Activated naive CD4-positive, alpha-beta T cell treated with anti-CD3 and anti-CD28 coated beads for 36 hours (primary cell): ENCODE measurements at regions of chr6 and their contacts with region 1.

Region 1: GRCh38 chr6:125749173-125749864 is at the start of gene HEY2:
- DNase-seq: peak; percentile 83
- H3K4me3 Mint-ChIP-seq: peak within 1 kb of the TSS; percentile 79
- H3K27ac Mint-ChIP-seq: no peak within 1 kb of the TSS
- H3K4me1 Mint-ChIP-seq: peaks cover 33% of the 10 kb centered on the region
- H3K27me3 Mint-ChIP-seq: peaks cover 51% of the 10 kb centered on the region
- total RNA-seq, gene HEY2: not detected

Region 2: GRCh38 chr6:124961777-124962611 is 787.3 kb before region 1 on chr6 and contains the start of gene RNF217:
- CTCF ChIA-PET with region 1: no interaction called
- intact Hi-C with region 1: loop called (anchors 5 kb)
- DNase-seq: peak; percentile 33
- H3K4me3 Mint-ChIP-seq: peak within 1 kb of the TSS; percentile 81
- H3K27ac Mint-ChIP-seq: no peak within 1 kb of the TSS
- H3K4me1 Mint-ChIP-seq: peaks cover 41% of the 10 kb centered on the region
- H3K27me3 Mint-ChIP-seq: peaks cover 52% of the 10 kb centered on the region
- total RNA-seq, gene RNF217: 1.8 to 2.4 TPM

Region 3: GRCh38 chr6:125191916-125192609 is 557.3 kb before region 1 on chr6:
- CTCF ChIA-PET with region 1: no interaction called
- intact Hi-C with region 1: loop called (anchors 2 kb)
- DNase-seq: peak; percentile 80
- H3K4me3 Mint-ChIP-seq: no peak overlapping the region
- H3K27ac Mint-ChIP-seq: no peak overlapping the region
- H3K4me1 Mint-ChIP-seq: peaks cover 2% of the 10 kb centered on the region
- H3K27me3 Mint-ChIP-seq: no peaks in the 10 kb centered on the region

Region 4: GRCh38 chr6:125314019-125314581 is 435.2 kb before region 1 on chr6:
- CTCF ChIA-PET with region 1: interaction called, 31 read pairs
- intact Hi-C with region 1: loop called (anchors 1 kb)
- DNase-seq: peak; percentile 61
- H3K4me3 Mint-ChIP-seq: no peak overlapping the region
- H3K27ac Mint-ChIP-seq: no peak overlapping the region
- H3K4me1 Mint-ChIP-seq: no peaks in the 10 kb centered on the region
- H3K27me3 Mint-ChIP-seq: peaks cover 2% of the 10 kb centered on the region

Region 5: GRCh38 chr6:125769147-125769783 is 19.9 kb after region 1 on chr6:
- CTCF ChIA-PET with region 1: interaction called, 5 read pairs
- intact Hi-C with region 1: loop called (anchors 1 kb)
- DNase-seq: no peak
- H3K4me3 Mint-ChIP-seq: no peak overlapping the region
- H3K27ac Mint-ChIP-seq: no peak overlapping the region
- H3K4me1 Mint-ChIP-seq: peaks cover 10% of the 10 kb centered on the region
- H3K27me3 Mint-ChIP-seq: peaks cover 3% of the 10 kb centered on the region

Region 6: GRCh38 chr6:125944434-125944816 is 195.1 kb after region 1 on chr6:
- CTCF ChIA-PET with region 1: no interaction called
- intact Hi-C with region 1: no loop called
- DNase-seq: no peak
- H3K4me3 Mint-ChIP-seq: no peak overlapping the region
- H3K27ac Mint-ChIP-seq: no peak overlapping the region
- H3K4me1 Mint-ChIP-seq: peaks cover 16% of the 10 kb centered on the region
- H3K27me3 Mint-ChIP-seq: peaks cover 6% of the 10 kb centered on the region

Region 7: GRCh38 chr6:125983246-125983945 is 234.1 kb after region 1 on chr6:
- CTCF ChIA-PET with region 1: no interaction called
- intact Hi-C with region 1: no loop called
- DNase-seq: no peak
- H3K4me3 Mint-ChIP-seq: no peak overlapping the region
- H3K27ac Mint-ChIP-seq: no peak overlapping the region
- H3K4me1 Mint-ChIP-seq: peaks cover 4% of the 10 kb centered on the region
- H3K27me3 Mint-ChIP-seq: no peaks in the 10 kb centered on the region